ENCODE measurements at regions of chrX and their contacts with region 1.

Region 1: GRCh38 chrX:74232859-74233258 is 71.1 kb upstream of the ZCCHC13 start:
- DNase-seq: peak; percentile 24
- H3K4me3 ChIP-seq: no peak overlapping the region
- H3K27ac ChIP-seq: no peak overlapping the region
- H3K4me1 ChIP-seq: no peaks in the 10 kb centered on the region
- H3K27me3 ChIP-seq: no peaks in the 10 kb centered on the region
- CTCF ChIP-seq: peak in 1 of 2 donors; percentile 25

Region 2: DNA sequence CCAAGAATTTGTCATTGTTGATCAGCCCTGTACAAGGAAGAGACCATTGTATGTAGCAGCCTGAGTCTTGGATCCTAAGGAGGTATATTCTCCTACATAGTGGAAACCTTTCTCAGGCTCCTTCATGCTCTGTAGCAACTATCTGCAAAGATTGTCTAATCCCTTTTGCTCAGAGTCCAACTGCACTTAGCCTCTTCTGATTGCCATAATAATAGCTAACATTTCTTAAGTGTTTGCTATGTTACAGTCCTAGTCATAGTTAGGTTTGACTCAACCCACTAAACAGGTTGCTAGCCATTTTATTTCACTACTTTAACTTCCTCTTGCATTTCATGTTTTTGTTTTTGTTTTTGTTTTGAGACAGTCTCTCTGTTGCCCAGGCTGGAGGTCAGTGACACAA is 137.6 kb after region 1 on chrX:
- CTCF ChIA-PET with region 1: interaction called, 15 read pairs
- dilution Hi-C with region 1: no loop called
- in situ Hi-C with region 1: no loop called
- intact Hi-C with region 1: no loop called
- DNase-seq: no peak
- H3K4me3 ChIP-seq: no peak overlapping the region
- H3K27ac ChIP-seq: no peak overlapping the region
- H3K4me1 ChIP-seq: no peaks in the 10 kb centered on the region
- H3K27me3 ChIP-seq: no peaks in the 10 kb centered on the region
- CTCF ChIP-seq: no peak

Region 3: DNA sequence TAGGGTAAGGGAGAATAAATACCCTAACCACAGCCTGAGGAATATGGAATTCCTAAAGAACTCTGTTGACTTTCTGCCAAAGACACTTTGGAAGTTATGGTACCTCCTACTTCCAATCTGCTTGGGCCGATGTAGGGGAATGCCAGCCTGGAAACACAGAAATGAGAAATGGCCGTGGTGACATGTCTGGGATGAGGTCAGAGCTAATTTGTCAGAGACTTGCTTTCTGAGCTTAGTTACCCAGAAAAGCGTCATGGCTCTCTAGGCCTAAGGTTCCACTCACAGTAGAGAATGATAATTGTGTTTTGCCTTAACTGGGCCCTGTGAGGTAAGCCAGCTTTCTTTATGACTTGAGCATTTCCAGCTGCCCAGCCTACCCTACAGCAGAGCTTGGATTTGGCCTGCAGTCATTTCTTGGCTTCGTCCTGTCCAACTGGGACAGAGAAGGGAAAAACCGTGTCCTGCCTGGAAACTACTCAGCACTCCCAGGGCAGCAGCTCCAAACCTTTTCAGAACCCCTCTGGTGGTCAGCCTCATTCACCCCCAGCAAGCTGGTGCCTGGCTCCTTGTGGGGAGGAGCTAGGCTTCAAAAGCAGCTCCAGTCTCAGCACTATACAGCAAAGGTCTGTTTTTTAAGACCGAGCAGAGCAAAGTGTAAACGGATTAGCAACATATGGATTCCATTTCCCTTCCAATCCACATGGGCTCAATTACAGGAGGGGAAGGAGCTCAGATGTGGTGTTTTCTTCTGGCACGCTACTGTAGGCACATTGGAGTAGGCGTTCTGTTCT is 289.3 kb after region 1 on chrX:
- CTCF ChIA-PET with region 1: no interaction called
- dilution Hi-C with region 1: no loop called
- in situ Hi-C with region 1: no loop called
- intact Hi-C with region 1: no loop called
- DNase-seq: no peak
- H3K4me3 ChIP-seq: no peak overlapping the region
- H3K27ac ChIP-seq: no peak overlapping the region
- H3K4me1 ChIP-seq: peaks cover 6% of the 10 kb centered on the region
- H3K27me3 ChIP-seq: peaks cover 1% of the 10 kb centered on the region
- CTCF ChIP-seq: no peak

Measured in mammary epithelial cell (primary cell).